ENCODE measurements at regions of chr1 and their contacts with region 1.

Region 1: DNA sequence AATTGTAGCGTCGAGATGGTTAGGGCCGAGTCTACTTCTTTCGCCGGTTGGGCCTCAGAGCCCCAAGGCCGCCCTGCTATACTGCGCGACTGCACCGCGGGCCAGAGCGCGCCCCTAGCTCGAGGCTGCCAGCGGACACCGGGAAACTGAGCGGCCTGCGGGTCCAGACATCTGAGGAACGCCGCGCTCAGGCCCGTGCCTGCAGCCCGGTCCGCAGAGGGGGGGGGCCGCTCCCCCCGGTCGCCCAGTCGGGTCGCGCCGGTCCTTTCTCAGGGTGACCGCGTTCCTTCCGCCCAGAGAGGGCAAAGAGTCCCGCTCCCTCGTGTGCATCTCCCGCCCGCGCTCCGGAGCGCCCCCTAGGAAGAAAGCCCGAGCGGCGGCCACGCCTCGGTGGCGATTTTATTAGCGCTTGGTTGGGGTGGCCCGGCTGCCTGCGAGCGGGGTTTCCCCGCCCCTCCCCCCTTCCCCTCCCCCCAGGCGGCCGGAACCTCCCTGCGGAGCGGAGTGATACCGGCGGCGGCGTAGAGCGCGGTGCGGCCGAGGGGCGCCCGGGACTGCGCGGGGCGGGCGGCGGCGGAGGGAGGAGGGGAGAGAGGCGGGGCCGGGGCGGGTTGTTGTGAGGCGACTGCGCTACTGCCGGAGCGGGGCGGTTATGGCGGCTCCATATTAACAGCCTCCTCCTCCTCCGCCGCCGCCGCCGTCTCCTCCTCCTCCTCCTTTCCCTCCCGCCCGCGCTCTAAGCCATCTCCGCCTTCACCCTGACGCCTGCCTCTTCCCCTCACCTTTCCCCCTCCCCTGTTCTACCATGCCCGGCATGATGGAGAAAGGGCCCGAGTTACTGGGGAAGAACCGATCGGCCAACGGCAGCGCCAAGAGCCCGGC is at the start of gene RCOR3:
- DNase-seq: peak; percentile 85
- H3K4me3 Mint-ChIP-seq: peak within 1 kb of the TSS; percentile 90
- H3K27ac Mint-ChIP-seq: peak within 1 kb of the TSS; percentile 90
- H3K4me1 Mint-ChIP-seq: peaks cover 20% of the 10 kb centered on the region
- H3K27me3 Mint-ChIP-seq: peaks cover 4% of the 10 kb centered on the region
- total RNA-seq, gene RCOR3: 40.5 and 41.0 TPM in 2 replicates

Region 2: DNA sequence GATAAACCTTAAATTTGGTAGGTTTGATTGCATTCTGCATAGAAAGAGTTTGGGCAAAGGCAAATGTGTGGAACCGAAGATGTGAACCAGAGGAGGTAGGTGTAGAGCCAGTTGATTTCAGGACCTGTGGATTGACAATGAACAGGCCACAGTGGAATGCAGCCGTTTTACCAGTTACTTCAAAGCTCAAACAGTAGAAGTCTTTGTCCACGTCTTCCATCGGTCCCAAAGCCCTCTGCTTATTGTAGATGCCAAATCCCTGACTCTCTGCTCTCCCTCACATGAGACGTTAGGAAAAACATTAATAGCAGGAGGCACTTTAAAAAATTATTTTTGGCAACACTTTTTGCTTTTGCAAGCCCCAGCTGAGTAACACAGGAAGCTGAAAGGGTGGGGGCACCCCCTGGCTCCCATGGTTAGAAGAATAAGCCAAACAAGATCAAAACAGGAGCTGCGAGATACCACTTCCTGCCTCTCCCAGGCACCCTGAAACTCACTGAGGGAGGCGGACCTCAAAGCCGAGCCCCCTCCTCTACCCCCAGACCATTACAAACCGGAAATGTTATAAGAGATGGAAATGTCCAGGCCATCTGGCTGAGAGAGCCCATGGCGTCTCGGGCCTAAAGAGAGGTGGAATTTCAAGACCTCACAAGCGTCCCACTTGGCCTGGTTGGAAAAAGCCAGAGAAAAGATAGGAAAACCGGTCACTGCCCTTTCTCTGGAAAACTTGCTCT is 1489.7 kb before region 1 on chr1:
- intact Hi-C with region 1: loop called (anchors 10 kb)
- DNase-seq: peak; percentile 75
- H3K4me3 Mint-ChIP-seq: no peak overlapping the region
- H3K27ac Mint-ChIP-seq: no peak overlapping the region
- H3K4me1 Mint-ChIP-seq: peaks cover 39% of the 10 kb centered on the region
- H3K27me3 Mint-ChIP-seq: no peaks in the 10 kb centered on the region

Region 3: DNA sequence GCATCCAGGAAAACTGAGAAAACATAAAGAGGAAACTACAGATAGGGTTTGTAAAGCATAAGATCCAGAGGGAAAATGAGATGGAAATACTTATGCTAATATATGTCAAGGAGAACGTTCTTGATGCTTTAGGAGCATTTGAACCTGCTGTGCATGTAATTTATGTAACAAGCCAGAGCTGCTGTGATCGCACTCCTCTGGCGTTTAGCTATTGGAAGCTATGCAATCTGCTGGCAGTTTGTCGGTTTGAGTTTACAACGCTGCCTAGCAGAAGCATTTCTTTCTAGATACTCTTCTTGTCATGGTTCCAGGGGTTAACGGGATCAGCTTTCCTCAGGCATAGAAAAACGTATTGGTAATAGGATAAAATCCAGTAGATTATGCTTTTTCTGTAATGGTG is 307.7 kb before region 1 on chr1:
- intact Hi-C with region 1: no loop called
- DNase-seq: no peak
- H3K4me3 Mint-ChIP-seq: no peak overlapping the region
- H3K27ac Mint-ChIP-seq: no peak overlapping the region
- H3K4me1 Mint-ChIP-seq: no peaks in the 10 kb centered on the region
- H3K27me3 Mint-ChIP-seq: peaks cover 3% of the 10 kb centered on the region

Region 4: GRCh38 chr1:211133836-211134669 is 124.9 kb before region 1 on chr1 and contains the start of gene KCNH1:
- intact Hi-C with region 1: loop called (anchors 1 kb)
- DNase-seq: peak; percentile 54
- H3K4me3 Mint-ChIP-seq: peak within 1 kb of the TSS; percentile 50
- H3K27ac Mint-ChIP-seq: no peak within 1 kb of the TSS
- H3K4me1 Mint-ChIP-seq: no peaks in the 10 kb centered on the region
- H3K27me3 Mint-ChIP-seq: peaks cover 70% of the 10 kb centered on the region
- total RNA-seq, gene KCNH1: not detected in 2 replicates

Region 5: GRCh38 chr1:211198111-211198510 is 60.9 kb before region 1 on chr1:
- intact Hi-C with region 1: no loop called
- DNase-seq: no peak
- H3K4me3 Mint-ChIP-seq: no peak overlapping the region
- H3K27ac Mint-ChIP-seq: no peak overlapping the region
- H3K4me1 Mint-ChIP-seq: no peaks in the 10 kb centered on the region
- H3K27me3 Mint-ChIP-seq: peaks cover 15% of the 10 kb centered on the region

Region 6: DNA sequence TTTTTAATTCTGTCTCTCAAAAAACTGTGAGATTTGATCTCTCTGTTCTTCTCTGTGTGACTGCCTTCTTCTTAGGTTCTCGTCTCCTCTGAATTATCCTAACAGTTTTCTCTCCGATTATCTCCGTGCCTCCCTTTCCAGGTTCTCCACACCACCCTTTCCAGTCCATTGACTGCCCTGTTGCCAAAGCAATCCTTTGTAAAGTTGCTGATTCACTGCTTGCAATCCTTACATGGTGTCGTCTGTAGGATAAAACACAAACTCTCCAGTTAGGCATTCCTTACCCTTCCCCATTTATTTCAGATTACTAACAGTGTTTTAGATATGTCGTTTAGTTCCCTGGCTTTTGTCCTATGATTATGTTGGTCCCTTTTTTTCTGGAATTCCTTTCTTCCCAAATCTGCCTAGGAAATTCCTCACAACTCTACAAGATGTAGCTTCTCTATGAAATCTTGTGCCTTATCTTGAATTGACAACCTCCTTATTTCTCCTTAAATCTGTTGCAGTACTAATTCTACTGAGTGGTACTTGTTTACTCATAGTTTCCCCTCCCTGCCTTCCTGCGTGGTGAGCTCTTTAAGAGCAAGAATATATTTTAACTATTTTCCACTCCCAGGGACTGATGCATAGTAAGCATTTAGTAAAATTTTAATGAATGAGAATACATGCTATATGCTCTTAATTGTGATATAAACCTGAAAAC is 22.5 kb after region 1 on chr1:
- intact Hi-C with region 1: loop called (anchors 1 kb)
- DNase-seq: no peak
- H3K4me3 Mint-ChIP-seq: no peak overlapping the region
- H3K27ac Mint-ChIP-seq: no peak overlapping the region
- H3K4me1 Mint-ChIP-seq: no peaks in the 10 kb centered on the region
- H3K27me3 Mint-ChIP-seq: no peaks in the 10 kb centered on the region

Region 7: DNA sequence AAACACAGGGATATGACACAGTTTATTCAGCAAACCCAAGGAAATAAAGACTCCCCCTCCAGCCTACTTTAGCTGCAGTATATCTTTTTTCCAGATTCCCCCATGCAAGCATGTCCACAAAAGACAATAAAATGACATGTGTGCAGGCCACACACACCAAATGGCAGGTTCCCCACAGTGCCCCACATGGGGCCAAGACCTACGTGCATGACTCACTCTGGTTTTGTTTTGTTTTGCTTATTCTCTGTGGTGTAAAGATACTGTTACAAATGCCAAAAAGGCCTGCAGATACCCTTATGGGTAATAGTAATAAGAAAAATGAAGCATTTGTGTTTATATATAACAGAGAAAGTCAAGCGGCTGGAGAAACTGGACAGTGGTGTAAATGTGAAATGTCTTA is 161.4 kb after region 1 on chr1:
- intact Hi-C with region 1: loop called (anchors 2 kb)
- DNase-seq: peak; percentile 5
- H3K4me3 Mint-ChIP-seq: no peak overlapping the region
- H3K27ac Mint-ChIP-seq: peak overlapping the region; percentile 6
- H3K4me1 Mint-ChIP-seq: peaks cover 28% of the 10 kb centered on the region
- H3K27me3 Mint-ChIP-seq: peaks cover under 1% of the 10 kb centered on the region

Region 8: GRCh38 chr1:211675230-211676105 is 416.5 kb after region 1 on chr1 and contains the start of gene NEK2:
- intact Hi-C with region 1: loop called (anchors 10 kb)
- DNase-seq: peak; percentile 87
- H3K4me3 Mint-ChIP-seq: peak within 1 kb of the TSS; percentile 95
- H3K27ac Mint-ChIP-seq: peak within 1 kb of the TSS; percentile 80
- H3K4me1 Mint-ChIP-seq: peaks cover 42% of the 10 kb centered on the region
- H3K27me3 Mint-ChIP-seq: no peaks in the 10 kb centered on the region
- total RNA-seq, gene NEK2: 13.9 and 18.9 TPM in 2 replicates

Region 9: DNA sequence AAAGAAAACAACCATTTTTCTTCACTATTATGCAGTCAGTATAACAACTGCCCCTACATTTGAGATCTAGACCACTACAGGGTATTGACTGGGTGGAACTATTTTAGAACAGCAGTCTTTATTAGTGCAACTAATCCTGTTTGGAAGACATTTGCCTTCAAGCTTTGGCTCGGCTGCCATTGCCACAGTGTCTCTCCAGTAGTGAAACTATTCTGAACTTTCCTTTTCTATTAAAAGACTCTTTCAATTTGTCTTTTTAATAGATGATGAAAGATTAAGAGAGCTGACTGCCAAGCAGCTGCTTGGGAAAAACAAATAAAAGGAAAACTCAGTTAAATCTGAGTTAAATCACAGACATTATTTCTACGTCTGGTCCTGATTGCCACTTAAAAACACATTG is 522.3 kb after region 1 on chr1:
- intact Hi-C with region 1: no loop called
- DNase-seq: no peak
- H3K4me3 Mint-ChIP-seq: no peak overlapping the region
- H3K27ac Mint-ChIP-seq: no peak overlapping the region
- H3K4me1 Mint-ChIP-seq: peaks cover 7% of the 10 kb centered on the region
- H3K27me3 Mint-ChIP-seq: no peaks in the 10 kb centered on the region

Measured in activated T-helper 1 cell treated with anti-CD3 and anti-CD28 coated beads, Interleukin-12 subunit alpha, Interleukin-12 subunit beta, Interleukin-2, Interleukin-4 antibody, amounts not matched to agents 30 ng/mL and 10 ng/mL and 1 ng/mL, durations not matched to agents 14 hours and 24 hours and 36 hours (primary cell).